Activated B cell treated with CpG ODN at 0.5 μM for 24 hours (primary cell): ENCODE measurements at regions of chr2 and their contacts with region 1.

Region 1: DNA sequence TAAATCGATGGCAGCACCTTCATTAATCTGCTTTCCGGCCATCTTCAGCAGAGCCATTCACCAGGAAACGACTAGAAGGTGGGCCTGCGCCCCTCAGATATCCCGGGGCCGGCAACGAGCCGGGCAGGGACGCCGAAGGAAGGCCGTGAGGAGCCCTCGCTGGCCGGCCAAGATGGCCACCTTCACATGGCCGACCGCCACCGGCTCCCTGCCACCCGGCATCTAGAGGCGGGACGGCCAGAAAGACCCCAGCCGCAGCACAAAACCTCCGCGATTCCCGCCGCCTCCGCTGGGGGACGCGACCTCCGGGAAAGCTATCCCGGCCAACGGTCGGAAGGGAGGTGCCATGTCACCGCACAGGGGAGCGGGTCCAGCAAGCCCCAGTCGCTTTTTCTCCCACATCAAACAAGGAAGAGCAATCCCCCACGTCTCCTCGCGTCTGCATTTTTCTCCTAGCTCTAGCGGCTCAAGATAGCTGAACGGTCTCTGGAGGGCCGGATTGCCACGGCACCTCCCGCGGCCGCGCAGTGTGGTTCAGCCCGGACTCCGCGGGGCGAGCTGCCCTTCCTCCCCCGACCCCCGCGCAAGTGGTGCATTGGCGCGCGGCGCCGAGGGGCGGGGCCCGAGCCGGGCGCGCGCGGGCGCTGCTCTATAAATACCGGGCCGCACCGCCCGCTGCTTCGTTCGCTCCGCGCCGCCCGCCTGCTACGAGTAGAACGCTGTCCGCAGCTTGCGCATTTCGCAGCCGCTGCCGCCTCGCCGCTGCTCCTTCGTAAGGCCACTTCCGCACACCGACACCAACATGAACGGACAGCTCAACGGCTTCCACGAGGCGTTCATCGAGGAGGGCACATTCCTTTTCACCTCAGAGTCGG is at the start of gene MAT2A:
- DNase-seq: peak; percentile 94
- ATAC-seq: peak; percentile 80
- H3K4me3 Mint-ChIP-seq: peak within 1 kb of the TSS; percentile 96
- H3K27ac Mint-ChIP-seq: peak within 1 kb of the TSS; percentile 99
- H3K4me1 Mint-ChIP-seq: peaks cover 37% of the 10 kb centered on the region
- H3K27me3 Mint-ChIP-seq: no peaks in the 10 kb centered on the region
- CTCF ChIP-seq: no peak
- total RNA-seq, gene MAT2A: 228 and 265 TPM in 2 replicates

Region 2: GRCh38 chr2:85354286-85355072 is 184.2 kb before region 1 on chr2 and contains the starts of genes ELMOD3 and RETSAT:
- CTCF ChIA-PET with region 1: no interaction called
- POLR2A ChIA-PET with region 1: interaction called, 31 read pairs
- intact Hi-C with region 1: loop called (anchors 1 kb)
- DNase-seq: peak; percentile 84
- ATAC-seq: peak; percentile 99
- H3K4me3 Mint-ChIP-seq: peak within 1 kb of the TSS; percentile 100
- H3K27ac Mint-ChIP-seq: peak within 1 kb of the TSS; percentile 99
- H3K4me1 Mint-ChIP-seq: peaks cover 48% of the 10 kb centered on the region
- H3K27me3 Mint-ChIP-seq: no peaks in the 10 kb centered on the region
- CTCF ChIP-seq: no peak
- total RNA-seq, gene ELMOD3: 19.2 and 25.4 TPM in 2 replicates
- total RNA-seq, gene RETSAT: 16.9 and 17.1 TPM in 2 replicates

Region 3: GRCh38 chr2:85437488-85438284 is 101.0 kb before region 1 on chr2:
- CTCF ChIA-PET with region 1: interaction called, 4 read pairs
- POLR2A ChIA-PET with region 1: interaction called, 137 read pairs
- intact Hi-C with region 1: loop called (anchors 1 kb)
- DNase-seq: peak; percentile 80
- ATAC-seq: peak; percentile 86
- H3K4me3 Mint-ChIP-seq: peak overlapping the region; percentile 87
- H3K27ac Mint-ChIP-seq: peak overlapping the region; percentile 95
- H3K4me1 Mint-ChIP-seq: peaks cover 33% of the 10 kb centered on the region
- H3K27me3 Mint-ChIP-seq: no peaks in the 10 kb centered on the region
- CTCF ChIP-seq: no peak

Region 4: GRCh38 chr2:85577386-85578242 is 38.9 kb after region 1 on chr2 and contains the start of gene VAMP8:
- CTCF ChIA-PET with region 1: no interaction called
- POLR2A ChIA-PET with region 1: interaction called, 13 read pairs
- intact Hi-C with region 1: no loop called
- DNase-seq: peak; percentile 56
- ATAC-seq: peak; percentile 76
- H3K4me3 Mint-ChIP-seq: peak within 1 kb of the TSS; percentile 94
- H3K27ac Mint-ChIP-seq: peak within 1 kb of the TSS; percentile 93
- H3K4me1 Mint-ChIP-seq: peaks cover 37% of the 10 kb centered on the region
- H3K27me3 Mint-ChIP-seq: no peaks in the 10 kb centered on the region
- CTCF ChIP-seq: no peak
- total RNA-seq, gene VAMP8: 128 and 145 TPM in 2 replicates

Region 5: GRCh38 chr2:85602476-85603234 is 63.9 kb after region 1 on chr2 and contains the start of gene TMEM150A:
- CTCF ChIA-PET with region 1: no interaction called
- POLR2A ChIA-PET with region 1: interaction called, 19 read pairs
- intact Hi-C with region 1: loop called (anchors 1 kb)
- DNase-seq: peak; percentile 91
- ATAC-seq: peak; percentile 97
- H3K4me3 Mint-ChIP-seq: peak within 1 kb of the TSS; percentile 90
- H3K27ac Mint-ChIP-seq: peak within 1 kb of the TSS; percentile 84
- H3K4me1 Mint-ChIP-seq: peaks cover 31% of the 10 kb centered on the region
- H3K27me3 Mint-ChIP-seq: no peaks in the 10 kb centered on the region
- CTCF ChIP-seq: no peak
- total RNA-seq, gene TMEM150A: 13.2 and 15.0 TPM in 2 replicates